ENCODE measurements at regions of chr4 and their contacts with region 1.

Region 1: DNA sequence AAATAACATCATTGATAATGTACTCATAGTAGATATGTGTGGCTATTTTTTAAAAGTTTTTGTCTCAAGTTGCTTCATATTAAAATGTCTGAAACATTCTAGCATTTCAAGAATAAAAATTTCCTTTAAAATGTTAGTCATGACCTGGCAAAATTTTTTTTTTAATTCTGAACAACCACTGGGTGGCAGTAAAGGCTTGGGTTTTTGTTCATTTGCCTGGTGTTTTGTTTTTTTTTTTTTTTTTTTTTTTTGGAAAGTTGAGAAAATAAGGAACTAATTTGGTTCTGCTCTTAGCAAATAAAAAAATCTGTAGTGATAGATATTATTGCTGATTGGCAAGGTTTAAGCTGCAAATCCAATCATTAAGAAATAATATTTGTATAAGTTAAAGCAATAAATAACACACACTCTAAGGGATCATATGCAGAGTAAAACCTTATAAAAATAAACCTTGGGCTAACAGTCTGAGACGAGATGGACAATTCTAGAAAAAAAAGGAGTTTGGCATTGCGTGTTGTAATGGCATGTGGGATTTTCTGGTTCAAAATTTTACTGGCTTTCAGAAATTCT is 81.4 kb downstream of the CEP44 start:
- DNase-seq: peak; percentile 69
- H3K4me3 Mint-ChIP-seq: no peak overlapping the region
- H3K27ac Mint-ChIP-seq: no peak overlapping the region
- H3K4me1 Mint-ChIP-seq: peaks cover 3% of the 10 kb centered on the region
- H3K27me3 Mint-ChIP-seq: peaks cover 16% of the 10 kb centered on the region

Region 2: DNA sequence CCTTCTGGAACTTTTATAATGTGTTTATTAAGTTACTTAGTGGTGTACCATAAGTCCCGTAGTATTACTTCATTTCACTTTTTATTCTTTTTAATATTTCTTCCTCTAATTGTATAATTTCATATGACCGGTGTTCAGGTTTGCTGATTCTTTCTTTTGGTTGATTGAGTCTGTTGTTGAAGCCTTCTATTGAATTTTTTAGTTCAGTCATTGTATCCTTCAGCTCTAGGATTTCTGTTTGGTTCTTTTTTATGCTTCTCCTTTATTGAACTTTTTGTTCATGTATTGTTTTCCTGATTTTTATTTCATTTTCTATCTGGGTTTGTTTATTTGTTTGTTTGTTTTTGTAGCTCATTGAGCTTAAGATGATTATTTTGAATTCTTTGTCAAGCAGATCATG is 72.6 kb before region 1 on chr4:
- intact Hi-C with region 1: no loop called
- DNase-seq: no peak
- H3K4me3 Mint-ChIP-seq: no peak overlapping the region
- H3K27ac Mint-ChIP-seq: no peak overlapping the region
- H3K4me1 Mint-ChIP-seq: peaks cover 2% of the 10 kb centered on the region
- H3K27me3 Mint-ChIP-seq: no peaks in the 10 kb centered on the region

Region 3: GRCh38 chr4:174604198-174604597 is 239.1 kb after region 1 on chr4:
- intact Hi-C with region 1: no loop called
- DNase-seq: no peak
- H3K4me3 Mint-ChIP-seq: no peak overlapping the region
- H3K27ac Mint-ChIP-seq: no peak overlapping the region
- H3K4me1 Mint-ChIP-seq: no peaks in the 10 kb centered on the region
- H3K27me3 Mint-ChIP-seq: peaks cover 3% of the 10 kb centered on the region

Region 4: DNA sequence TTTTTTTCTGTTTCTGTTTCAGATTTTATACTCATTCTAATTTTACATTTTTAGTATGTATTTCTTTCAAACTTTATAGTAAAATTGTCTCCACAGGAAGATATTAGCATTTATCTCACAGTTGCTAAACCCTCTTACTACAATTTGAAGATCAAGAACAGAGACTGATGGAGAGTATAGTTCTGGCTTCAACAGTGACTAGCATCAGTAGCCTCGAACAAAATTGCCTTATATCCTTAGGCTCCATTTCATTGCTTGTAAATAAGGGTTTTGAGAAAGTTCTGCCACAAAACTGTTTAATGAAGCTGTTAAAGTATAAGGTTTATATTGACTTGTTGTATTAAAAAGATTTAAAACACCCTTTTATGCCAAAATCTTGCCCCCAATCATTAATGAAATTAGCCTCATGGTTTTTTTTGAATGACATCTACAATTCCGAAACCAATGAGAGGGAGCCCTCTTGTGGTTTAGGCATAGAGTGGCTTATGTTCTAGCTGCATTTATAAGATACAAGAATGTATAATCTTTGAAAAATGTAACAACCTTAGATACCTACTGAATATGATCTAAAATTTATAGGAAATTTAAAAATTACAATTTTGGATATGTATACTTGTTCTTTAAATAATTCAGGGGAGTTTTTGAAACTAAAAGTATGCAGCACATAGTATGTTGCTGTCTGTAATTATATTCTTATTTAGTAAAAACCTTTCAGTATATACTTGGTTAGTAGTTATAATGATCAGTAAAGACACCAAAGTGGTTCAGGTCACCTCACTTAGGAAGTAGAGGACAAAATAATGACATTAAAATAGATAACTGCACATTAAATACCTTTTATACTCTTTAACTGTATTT is 267.0 kb after region 1 on chr4:
- intact Hi-C with region 1: loop called (anchors 1 kb)
- DNase-seq: no peak
- H3K4me3 Mint-ChIP-seq: no peak overlapping the region
- H3K27ac Mint-ChIP-seq: no peak overlapping the region
- H3K4me1 Mint-ChIP-seq: peaks cover 6% of the 10 kb centered on the region
- H3K27me3 Mint-ChIP-seq: no peaks in the 10 kb centered on the region

Region 5: GRCh38 chr4:174714393-174715211 is 349.5 kb after region 1 on chr4:
- intact Hi-C with region 1: loop called (anchors 1 kb)
- DNase-seq: peak; percentile 71
- H3K4me3 Mint-ChIP-seq: no peak overlapping the region
- H3K27ac Mint-ChIP-seq: no peak overlapping the region
- H3K4me1 Mint-ChIP-seq: no peaks in the 10 kb centered on the region
- H3K27me3 Mint-ChIP-seq: peaks cover 6% of the 10 kb centered on the region

Region 6: DNA sequence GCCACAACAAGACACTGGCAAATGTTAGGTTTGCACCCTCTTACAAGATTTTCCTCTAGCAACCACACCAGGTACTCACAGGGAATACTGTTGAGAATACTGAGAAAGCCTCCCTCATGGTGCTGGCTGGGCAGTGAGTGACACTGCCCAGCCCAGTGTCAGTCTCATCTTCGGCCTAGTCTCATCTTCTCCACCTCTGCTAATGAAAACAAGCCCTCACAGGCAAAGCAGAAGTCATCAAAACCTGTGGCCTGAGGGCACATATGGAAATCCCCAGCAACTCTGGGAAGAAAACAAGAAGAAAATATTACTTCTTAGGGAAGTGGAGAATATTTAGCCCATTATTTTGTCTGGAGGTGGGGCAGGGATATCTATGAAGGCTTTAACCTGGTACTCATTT is 545.2 kb after region 1 on chr4:
- intact Hi-C with region 1: no loop called
- DNase-seq: no peak
- H3K4me3 Mint-ChIP-seq: no peak overlapping the region
- H3K27ac Mint-ChIP-seq: no peak overlapping the region
- H3K4me1 Mint-ChIP-seq: no peaks in the 10 kb centered on the region
- H3K27me3 Mint-ChIP-seq: no peaks in the 10 kb centered on the region

Region 7: DNA sequence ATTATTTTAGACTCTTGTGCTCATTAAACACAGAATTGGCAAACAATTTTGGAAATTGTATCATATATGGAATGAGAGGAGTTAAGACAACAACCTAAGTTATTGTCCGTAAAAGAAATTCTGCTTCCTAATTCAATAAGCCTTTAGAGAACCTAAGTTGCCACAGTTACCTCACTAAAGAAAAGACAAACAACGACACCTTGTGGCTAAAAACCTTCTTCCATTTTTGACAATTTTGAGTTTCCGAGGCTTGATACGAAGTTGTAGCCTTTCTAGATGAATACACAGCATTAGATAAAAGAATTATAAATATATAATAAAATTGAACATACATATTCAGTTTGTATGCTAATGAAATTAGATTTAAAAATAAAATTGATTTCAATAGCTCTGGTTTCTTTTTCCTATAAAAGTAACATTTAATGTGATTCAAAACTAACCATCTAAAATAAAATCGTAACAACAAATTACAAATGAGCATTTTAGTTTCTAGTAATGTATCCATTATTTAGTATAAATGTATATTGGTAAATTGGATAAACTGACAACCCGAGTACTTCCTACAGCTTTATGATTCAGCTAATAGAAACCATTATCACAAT is 1171.8 kb after region 1 on chr4:
- intact Hi-C with region 1: loop called (anchors 5 kb)
- DNase-seq: no peak
- H3K4me3 Mint-ChIP-seq: no peak overlapping the region
- H3K27ac Mint-ChIP-seq: no peak overlapping the region
- H3K4me1 Mint-ChIP-seq: no peaks in the 10 kb centered on the region
- H3K27me3 Mint-ChIP-seq: no peaks in the 10 kb centered on the region

Measured in activated CD4-positive, alpha-beta T cell treated with anti-CD3 and anti-CD28 coated beads, Interleukin-2, amount 10 ng/mL, durations not matched to agents 24 days and 14 days (primary cell).